CD4-positive, alpha-beta T cell (primary cell): ENCODE measurements at regions of chr3 and their contacts with region 1.

Region 1: DNA sequence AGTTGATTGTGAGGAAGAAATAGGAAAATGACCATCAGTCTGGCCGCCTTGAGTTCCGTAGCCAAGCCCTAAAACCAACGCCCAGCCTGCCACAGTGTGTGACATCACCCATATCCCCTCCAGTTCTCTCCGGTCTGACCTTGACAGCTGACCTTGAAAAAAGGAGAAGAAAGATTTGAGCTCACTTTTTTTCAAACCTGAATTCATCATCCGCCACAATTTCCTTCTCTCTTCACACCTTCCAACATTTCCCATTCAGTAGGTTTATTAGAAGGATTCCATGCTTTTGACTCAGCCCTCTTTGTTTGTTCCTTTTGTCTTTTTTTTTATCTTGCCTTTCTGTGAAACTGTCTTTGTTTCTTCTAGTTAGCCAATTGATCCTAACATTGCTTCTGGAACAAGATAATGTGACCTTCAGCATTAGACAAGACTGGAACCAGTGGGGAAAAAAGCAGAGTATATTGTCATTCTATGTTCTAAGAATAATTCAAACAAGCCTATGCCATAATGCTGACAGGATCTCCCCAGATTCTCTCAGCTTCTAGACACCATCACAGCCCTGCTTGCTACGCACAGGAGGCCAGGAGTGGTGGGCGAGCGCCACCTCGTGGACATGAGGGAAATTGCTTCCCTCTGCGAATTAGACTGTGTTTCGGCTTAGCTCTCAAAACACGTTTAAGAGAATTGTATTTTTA is 283.1 kb downstream of the FGF12 start:
- DNase-seq: peak in 13 of 14 experiments; percentile 3 to 61 (median 21)
- ATAC-seq: no peak
- H3K4me3 ChIP-seq: no peak overlapping the region
- H3K4me3 Mint-ChIP-seq: no peak overlapping the region
- H3K27ac ChIP-seq: no peak overlapping the region
- H3K27ac Mint-ChIP-seq: no peak overlapping the region
- H3K4me1 ChIP-seq: no peaks in the 10 kb centered on the region
- H3K4me1 Mint-ChIP-seq: no peaks in the 10 kb centered on the region
- H3K27me3 ChIP-seq: peaks cover 3 to 9% of the 10 kb centered on the region in 2 experiments
- H3K27me3 Mint-ChIP-seq: peaks cover 23% of the 10 kb centered on the region
- CTCF ChIP-seq: peak; percentile 80

Region 2: DNA sequence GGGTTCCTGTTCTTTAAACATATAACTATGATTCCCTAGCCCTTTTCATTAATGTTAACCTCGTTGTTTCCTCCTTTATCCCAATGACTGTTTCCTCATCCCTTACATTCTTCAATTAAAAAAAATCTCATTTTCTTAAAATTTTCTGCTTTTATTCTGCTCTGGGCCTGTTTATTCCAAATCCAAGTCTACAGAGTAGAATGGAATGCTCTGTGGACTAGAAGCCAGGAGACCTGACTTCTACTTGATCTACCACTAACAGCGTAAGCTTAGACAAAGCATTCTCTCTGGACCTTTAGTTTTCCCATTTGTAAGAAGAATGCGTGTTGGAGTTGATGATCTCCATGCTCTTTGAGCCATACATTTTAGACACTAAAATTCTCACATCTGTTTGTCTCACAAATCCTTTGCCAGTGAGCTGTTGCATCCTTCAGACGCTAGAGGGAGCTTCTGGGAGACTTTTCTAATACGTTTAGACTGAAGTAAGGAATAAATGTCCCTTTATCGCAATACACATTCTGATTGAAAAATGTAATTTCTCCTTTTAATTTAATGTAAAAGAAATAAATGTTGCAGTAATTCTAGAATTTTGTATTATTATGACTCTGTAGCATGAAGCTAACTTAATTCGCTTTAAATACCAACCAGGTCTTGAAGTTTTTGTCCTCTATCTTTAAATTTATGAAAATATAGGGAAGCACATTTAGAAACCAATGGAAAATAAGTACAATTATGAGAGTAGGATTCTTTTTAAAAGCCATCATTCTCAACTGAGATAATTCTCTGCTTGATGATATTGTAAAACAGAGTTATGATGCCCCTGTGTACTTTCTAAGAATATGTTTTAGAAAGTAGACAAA is 1560.0 kb before region 1 on chr3:
- CTCF ChIA-PET with region 1: no interaction called
- POLR2A ChIA-PET with region 1: no interaction called
- intact Hi-C with region 1: loop called in 1 of 2 experiments (anchors 10 kb)
- DNase-seq: peak in 3 of 14 experiments; percentile 23 to 26 (median 24)
- ATAC-seq: no peak
- H3K4me3 ChIP-seq: no peak overlapping the region
- H3K4me3 Mint-ChIP-seq: no peak overlapping the region
- H3K27ac ChIP-seq: no peak overlapping the region
- H3K27ac Mint-ChIP-seq: no peak overlapping the region
- H3K4me1 ChIP-seq: no peaks in the 10 kb centered on the region
- H3K4me1 Mint-ChIP-seq: no peaks in the 10 kb centered on the region
- H3K27me3 ChIP-seq: no peaks in the 10 kb centered on the region
- H3K27me3 Mint-ChIP-seq: peaks cover 17% of the 10 kb centered on the region
- CTCF ChIP-seq: peak; percentile 73

Region 3: DNA sequence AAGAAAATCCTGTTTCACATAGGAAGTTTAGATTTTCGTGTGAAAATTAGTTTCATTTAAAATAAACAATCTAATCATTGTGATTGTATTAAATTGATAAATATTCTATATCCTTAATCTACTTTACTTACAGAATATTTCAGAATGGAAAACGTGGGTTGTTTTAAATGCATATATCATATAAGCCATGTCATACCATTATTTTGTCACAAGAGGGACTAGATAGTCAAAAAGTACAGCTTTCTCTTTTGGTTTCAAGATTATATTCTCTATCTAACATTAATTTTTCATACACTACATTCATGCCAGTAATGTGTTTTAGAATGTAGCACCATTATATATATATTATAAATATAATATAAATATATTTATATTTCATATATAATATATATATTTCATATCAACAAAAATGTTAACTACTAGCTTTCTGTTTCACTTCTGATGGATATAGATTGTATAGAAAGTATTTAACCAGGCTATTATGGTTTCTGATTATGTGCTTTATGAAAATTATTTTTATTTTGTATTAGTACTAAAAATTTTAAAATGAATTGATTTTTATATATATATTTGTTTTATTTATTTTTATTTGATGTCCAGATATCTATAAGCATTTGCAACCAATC is 1199.9 kb before region 1 on chr3:
- CTCF ChIA-PET with region 1: no interaction called
- POLR2A ChIA-PET with region 1: no interaction called
- intact Hi-C with region 1: loop called in 1 of 2 experiments (anchors 10 kb)
- DNase-seq: peak in 2 of 14 experiments; percentile 7 to 15
- ATAC-seq: no peak
- H3K4me3 ChIP-seq: no peak overlapping the region
- H3K4me3 Mint-ChIP-seq: no peak overlapping the region
- H3K27ac ChIP-seq: no peak overlapping the region
- H3K27ac Mint-ChIP-seq: no peak overlapping the region
- H3K4me1 ChIP-seq: no peaks in the 10 kb centered on the region
- H3K4me1 Mint-ChIP-seq: peaks cover 11% of the 10 kb centered on the region
- H3K27me3 ChIP-seq: no peaks in the 10 kb centered on the region
- H3K27me3 Mint-ChIP-seq: no peaks in the 10 kb centered on the region
- CTCF ChIP-seq: peak; percentile 26

Region 4: GRCh38 chr3:191412759-191413158 is 1031.5 kb before region 1 on chr3:
- CTCF ChIA-PET with region 1: no interaction called
- POLR2A ChIA-PET with region 1: no interaction called
- intact Hi-C with region 1: loop called (anchors 5 to 10 kb)
- DNase-seq: no peak
- ATAC-seq: no peak
- H3K4me3 ChIP-seq: no peak overlapping the region
- H3K4me3 Mint-ChIP-seq: no peak overlapping the region
- H3K27ac ChIP-seq: no peak overlapping the region
- H3K27ac Mint-ChIP-seq: no peak overlapping the region
- H3K4me1 ChIP-seq: no peaks in the 10 kb centered on the region
- H3K4me1 Mint-ChIP-seq: no peaks in the 10 kb centered on the region
- H3K27me3 ChIP-seq: no peaks in the 10 kb centered on the region
- H3K27me3 Mint-ChIP-seq: peaks cover 4% of the 10 kb centered on the region
- CTCF ChIP-seq: no peak

Region 5: DNA sequence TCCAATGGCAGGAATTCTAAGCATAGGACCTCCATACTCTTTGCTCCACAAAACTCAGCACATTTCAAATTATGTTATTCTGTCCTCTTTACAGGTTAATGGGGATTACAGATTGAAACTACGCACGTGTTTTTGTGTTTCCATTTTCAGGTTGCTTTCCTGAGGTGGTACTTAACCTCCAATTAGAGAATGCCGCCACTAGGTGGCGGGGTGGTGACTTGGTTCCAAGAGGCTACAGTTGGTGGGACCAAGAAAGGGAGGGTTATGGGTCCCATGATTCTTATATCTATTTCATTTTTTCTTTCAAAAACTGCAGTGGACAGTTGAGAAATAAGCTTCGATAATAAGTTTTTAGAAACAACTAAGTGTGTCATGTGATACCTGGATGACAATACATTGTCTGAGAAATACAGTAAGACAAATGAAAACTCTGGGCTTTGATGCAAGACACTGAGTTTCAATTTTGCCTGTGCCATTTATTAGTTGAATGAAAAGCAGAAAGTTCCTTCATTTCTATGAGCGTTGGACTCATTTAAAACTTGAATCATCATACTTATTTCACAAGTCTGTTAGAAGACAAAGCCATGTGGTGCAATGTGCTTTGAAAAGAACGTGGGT is 255.9 kb before region 1 on chr3:
- CTCF ChIA-PET with region 1: no interaction called
- POLR2A ChIA-PET with region 1: no interaction called
- intact Hi-C with region 1: loop called in 1 of 2 experiments (anchors 5 kb)
- DNase-seq: peak in 8 of 14 experiments; percentile 1 to 29 (median 13)
- ATAC-seq: no peak
- H3K4me3 ChIP-seq: no peak overlapping the region
- H3K4me3 Mint-ChIP-seq: no peak overlapping the region
- H3K27ac ChIP-seq: no peak overlapping the region
- H3K27ac Mint-ChIP-seq: no peak overlapping the region
- H3K4me1 ChIP-seq: no peaks in the 10 kb centered on the region
- H3K4me1 Mint-ChIP-seq: no peaks in the 10 kb centered on the region
- H3K27me3 ChIP-seq: no peaks in the 10 kb centered on the region
- H3K27me3 Mint-ChIP-seq: no peaks in the 10 kb centered on the region
- CTCF ChIP-seq: peak; percentile 42